Posterior cingulate gyrus (tissue), 11 donors: ENCODE measurements at regions of chr11 and their contacts with region 1.

Region 1: DNA sequence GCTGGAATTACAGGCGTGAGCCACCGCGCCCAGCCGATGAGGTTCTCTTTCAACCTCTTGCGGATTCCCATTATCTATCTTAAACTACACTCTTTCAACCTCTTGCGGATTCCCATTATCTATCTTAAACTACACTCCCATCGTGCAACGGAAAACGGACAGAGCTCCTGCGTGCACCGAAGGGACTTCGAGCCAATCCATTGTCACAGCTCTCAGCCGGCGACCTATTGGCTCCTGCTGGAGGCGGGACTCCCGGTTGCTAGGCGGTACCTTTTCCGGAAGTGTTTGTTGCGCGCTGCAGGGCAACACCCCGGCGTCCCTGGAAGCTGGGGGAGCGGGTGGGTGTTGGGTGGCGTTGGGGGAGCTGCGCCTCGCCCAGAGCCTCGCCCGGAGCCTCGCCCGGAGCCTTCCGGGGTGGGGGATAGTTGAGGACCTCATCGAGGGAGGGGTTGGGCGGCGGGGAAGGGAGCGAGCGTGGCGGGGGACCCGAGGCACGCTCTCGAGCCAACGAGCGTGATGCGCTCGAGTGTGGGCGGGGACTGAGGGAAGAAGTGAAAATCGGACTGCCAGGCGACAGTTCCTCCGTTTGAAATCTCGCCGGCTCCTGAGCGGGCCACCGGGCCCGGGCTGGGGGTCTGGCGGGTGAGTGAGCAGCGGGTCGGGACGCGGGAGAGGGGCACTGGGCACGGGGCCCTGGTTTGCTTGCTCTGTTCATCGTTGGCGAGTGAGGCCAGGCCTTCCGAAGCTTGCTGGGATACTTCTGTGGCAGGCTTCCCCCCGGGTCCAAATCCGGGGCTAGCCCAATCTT is at the start of gene CEP164:
- DNase-seq: peak; percentile 92 to 100 (median 96)

Region 2: GRCh38 chr11:117316197-117316961 is 11.4 kb before region 1 on chr11 and contains the start of gene BACE1:
- intact Hi-C with region 1: loop called (anchors 2 kb)
- DNase-seq: peak; percentile 83 to 99 (median 92)

Region 3: DNA sequence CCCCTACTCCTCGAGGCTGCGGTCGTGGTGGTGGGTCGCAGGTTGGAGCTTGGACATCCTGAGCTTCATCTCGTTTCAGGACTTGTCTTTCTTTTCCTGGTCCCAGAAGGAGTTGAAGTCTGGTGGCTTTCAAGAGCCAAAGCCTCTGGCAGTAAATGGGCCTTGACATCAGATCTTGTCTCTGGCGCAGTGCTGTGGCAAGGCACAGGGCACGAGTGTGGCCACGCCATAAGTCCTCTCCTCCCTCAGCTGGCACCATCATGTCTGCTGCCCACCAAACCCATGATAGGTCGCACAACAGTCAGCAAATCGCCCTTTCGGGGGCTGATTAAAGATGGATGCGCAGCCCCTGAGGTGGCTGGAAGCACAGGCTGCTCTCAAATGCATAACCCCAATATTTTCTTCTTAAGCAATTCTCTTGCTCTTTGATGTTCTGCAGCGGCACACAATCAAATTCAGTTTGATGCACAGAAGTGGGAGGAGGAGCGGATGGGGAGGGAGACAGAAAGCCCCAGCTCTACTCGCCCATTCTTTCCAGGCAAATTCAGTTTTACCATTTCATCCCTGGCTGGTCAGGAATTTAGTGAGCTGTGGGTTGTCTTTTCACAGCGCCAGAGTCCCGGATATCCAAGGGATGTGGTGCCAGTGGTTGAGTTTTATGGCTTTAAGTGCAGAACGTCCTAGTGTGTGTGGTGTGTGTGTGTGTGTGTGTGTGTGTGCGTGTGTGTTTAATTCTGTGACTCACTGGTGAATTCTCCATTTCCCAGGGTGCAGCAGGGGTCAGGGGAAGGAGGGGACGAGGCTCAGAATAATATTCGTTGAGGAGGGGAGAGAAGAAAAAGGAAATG is 307.2 kb after region 1 on chr11:
- intact Hi-C with region 1: no loop called
- DNase-seq: peak in 2 of 10 donors; percentile 75 to 81